Motor neuron (in vitro differentiated cells): ENCODE measurements at regions of chr2 and their contacts with region 1.

Region 1: DNA sequence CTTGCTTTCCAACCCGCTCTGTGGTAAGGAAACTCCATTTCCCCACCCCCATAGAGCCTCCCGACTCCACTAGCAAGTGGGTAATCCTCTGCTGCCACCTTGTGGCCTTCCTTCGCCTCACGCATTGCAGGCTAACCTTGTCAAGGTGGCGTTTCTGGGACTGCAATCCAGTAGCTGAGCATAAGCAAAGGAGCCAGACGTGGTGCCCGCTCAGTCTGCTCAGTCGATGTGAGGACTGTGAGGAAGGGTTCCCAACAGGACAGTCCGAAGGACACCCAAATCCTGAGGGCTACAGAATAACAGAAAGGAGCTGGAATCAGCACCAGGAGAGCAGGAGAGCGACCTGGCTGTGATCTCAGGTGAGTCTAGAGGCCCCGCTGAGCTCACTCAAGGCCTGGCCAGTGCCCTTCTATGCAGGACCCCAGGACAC is 144.2 kb downstream of the SUCLG1 start:
- ATAC-seq: peak; percentile 88 to 100 (median 96)
- H3K4me3 ChIP-seq: no peak overlapping the region
- H3K27ac ChIP-seq: no peak overlapping the region
- H3K4me1 ChIP-seq: no peaks in the 10 kb centered on the region

Region 2: DNA sequence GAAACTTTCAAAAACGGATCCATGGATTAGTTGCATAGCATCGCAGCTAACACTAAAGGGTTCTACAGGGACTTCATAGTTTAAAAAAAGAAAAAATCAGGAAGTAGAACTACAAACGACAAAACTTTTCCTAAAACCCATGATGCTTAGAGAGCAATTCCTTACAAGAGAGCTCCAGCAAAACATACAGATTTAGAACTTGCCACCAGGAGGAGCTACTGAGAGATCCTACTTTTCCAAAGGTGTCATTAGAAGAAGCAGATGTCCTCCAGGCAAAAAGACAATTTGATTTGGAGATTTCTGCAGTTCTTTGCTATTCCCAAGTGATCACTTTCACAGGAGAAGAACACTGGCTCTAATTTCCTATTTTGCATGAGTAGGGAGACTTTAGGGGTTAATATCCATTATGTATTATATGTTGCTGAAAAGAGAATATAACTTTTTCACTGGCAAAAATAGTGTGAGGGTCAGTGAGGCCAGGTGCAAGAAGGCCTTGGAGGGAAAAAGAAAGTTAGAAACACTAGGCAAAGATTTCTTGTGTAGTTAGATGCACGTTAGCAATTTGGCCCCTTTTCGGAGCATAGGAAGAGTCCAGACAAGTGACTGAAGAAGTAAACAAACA is 292.0 kb before region 1 on chr2:
- in situ Hi-C with region 1: loop called in 1 of 9 experiments (anchors 10 kb)
- ATAC-seq: peak in 3 of 8 experiments; percentile 42 to 69 (median 54)
- H3K4me3 ChIP-seq: no peak overlapping the region
- H3K27ac ChIP-seq: no peak overlapping the region
- H3K4me1 ChIP-seq: peaks cover 0 to 3% of the 10 kb centered on the region in 2 donors

Region 3: DNA sequence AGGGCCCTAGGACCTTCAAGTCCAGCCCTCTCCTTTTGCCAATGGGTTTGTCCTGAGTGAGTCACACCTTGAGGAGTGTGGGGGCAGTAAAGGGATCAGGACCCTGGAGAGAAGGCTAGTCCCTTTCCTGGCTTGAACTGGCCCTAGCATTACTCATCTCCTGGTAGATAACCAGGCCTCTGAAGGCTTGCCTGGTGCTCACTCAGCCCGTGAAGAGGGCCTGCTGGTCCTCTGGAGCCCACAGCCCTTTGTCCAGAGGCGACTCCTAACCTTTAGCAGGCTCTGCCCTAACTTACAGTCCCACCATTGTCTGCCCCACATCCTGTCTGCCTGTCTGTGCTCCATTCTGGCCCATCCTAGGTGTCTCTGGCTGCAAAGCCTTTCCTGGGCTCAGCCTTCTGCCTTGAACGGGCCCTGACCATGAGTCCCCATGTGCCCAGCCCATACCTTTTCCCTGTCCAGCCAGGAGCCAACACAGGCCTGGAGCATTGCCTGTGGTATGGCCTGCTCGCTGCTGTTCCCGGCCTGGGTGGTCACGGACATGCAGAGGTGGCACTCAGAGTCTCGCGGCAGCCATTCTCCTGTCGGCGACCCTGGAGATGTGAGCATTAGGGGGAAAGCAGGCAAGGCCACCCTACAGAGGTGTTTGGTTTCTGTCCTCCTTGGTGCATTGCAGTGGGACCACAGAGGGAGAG is 1348.1 kb after region 1 on chr2:
- in situ Hi-C with region 1: no loop called
- ATAC-seq: peak in 6 of 8 experiments; percentile 12 to 85 (median 26)
- H3K4me3 ChIP-seq: no peak overlapping the region
- H3K27ac ChIP-seq: no peak overlapping the region
- H3K4me1 ChIP-seq: no peaks in the 10 kb centered on the region